Activated CD4-positive, alpha-beta memory T cell treated with anti-CD3 and anti-CD28 coated beads for 36 hours (primary cell): ENCODE measurements at regions of chr1 and their contacts with region 1.

Region 1: GRCh38 chr1:231357831-231358354 is 19.8 kb downstream of the SPRTN start:
- DNase-seq: peak; percentile 40
- H3K4me3 Mint-ChIP-seq: no peak overlapping the region
- H3K27ac Mint-ChIP-seq: peak overlapping the region; percentile 25
- H3K4me1 Mint-ChIP-seq: peaks cover 4% of the 10 kb centered on the region
- H3K27me3 Mint-ChIP-seq: no peaks in the 10 kb centered on the region

Region 2: GRCh38 chr1:231590453-231591198 is 232.7 kb after region 1 on chr1:
- CTCF ChIA-PET with region 1: interaction called, 9 read pairs
- POLR2A ChIA-PET with region 1: no interaction called
- intact Hi-C with region 1: loop called (anchors 1 kb)
- DNase-seq: peak; percentile 63
- H3K4me3 Mint-ChIP-seq: no peak overlapping the region
- H3K27ac Mint-ChIP-seq: no peak overlapping the region
- H3K4me1 Mint-ChIP-seq: peaks cover 4% of the 10 kb centered on the region
- H3K27me3 Mint-ChIP-seq: no peaks in the 10 kb centered on the region

Region 3: GRCh38 chr1:231603598-231604275 is 245.8 kb after region 1 on chr1:
- CTCF ChIA-PET with region 1: interaction called, 10 read pairs
- POLR2A ChIA-PET with region 1: no interaction called
- intact Hi-C with region 1: loop called (anchors 1 kb)
- DNase-seq: peak; percentile 42
- H3K4me3 Mint-ChIP-seq: peak overlapping the region; percentile 84
- H3K27ac Mint-ChIP-seq: peak overlapping the region; percentile 66
- H3K4me1 Mint-ChIP-seq: peaks cover 5% of the 10 kb centered on the region
- H3K27me3 Mint-ChIP-seq: no peaks in the 10 kb centered on the region

Region 4: GRCh38 chr1:231806623-231807495 is 449.0 kb after region 1 on chr1:
- CTCF ChIA-PET with region 1: interaction called, 3 read pairs
- POLR2A ChIA-PET with region 1: no interaction called
- intact Hi-C with region 1: loop called (anchors 10 kb)
- DNase-seq: peak; percentile 60
- H3K4me3 Mint-ChIP-seq: no peak overlapping the region
- H3K27ac Mint-ChIP-seq: no peak overlapping the region
- H3K4me1 Mint-ChIP-seq: no peaks in the 10 kb centered on the region
- H3K27me3 Mint-ChIP-seq: no peaks in the 10 kb centered on the region